Upper lobe of right lung (tissue), 1 donor: ENCODE measurements at regions of chr9 and their contacts with region 1.

Region 1: GRCh38 chr9:69044240-69045219 is 9.0 kb downstream of the FXN start:
- DNase-seq: no peak
- ATAC-seq: no peak
- H3K4me3 ChIP-seq: no peak overlapping the region
- H3K27ac ChIP-seq: no peak overlapping the region
- H3K4me1 ChIP-seq: peaks cover 8% of the 10 kb centered on the region
- H3K27me3 ChIP-seq: no peaks in the 10 kb centered on the region
- CTCF ChIP-seq: no peak

Region 2: DNA sequence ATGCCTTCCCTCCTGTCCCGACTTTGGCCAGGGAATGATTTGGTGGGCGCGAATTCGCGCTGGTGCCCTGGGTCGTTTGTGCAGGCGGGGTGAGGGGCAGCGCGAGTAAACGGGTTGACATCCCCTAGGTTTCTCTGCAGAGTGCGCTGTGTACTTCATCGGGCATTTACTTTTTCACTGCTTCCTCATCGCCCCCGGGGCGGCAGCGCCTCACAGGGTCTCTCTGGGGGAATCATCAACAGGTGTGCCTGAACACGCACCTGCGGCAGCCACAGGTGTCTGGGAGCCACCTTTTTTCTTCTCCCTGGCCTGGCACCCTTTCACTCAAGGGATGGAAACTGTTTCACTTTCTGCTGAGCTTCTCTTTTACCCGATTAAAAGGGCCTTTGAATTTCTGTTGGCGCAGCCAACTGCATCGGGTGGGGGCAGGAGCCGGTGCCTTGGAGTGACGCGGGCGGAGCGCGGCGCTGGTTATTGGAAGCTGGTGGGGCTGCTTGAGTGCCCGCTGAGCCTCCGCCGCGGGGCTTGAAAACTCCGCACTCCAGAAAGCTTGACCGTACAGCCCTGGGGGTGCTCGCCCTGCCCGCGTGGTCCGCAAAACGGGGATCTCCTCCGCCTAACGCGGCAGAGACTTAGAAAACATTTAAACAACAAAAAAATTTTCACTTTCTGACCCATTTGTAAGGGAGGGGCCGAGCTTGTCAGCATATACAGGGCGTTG is 77.5 kb after region 1 on chr9:
- intact Hi-C with region 1: no loop called
- DNase-seq: peak; percentile 89
- ATAC-seq: peak; percentile 71
- H3K4me3 ChIP-seq: peak overlapping the region; percentile 83
- H3K27ac ChIP-seq: peak overlapping the region; percentile 89
- H3K4me1 ChIP-seq: no peaks in the 10 kb centered on the region
- H3K27me3 ChIP-seq: no peaks in the 10 kb centered on the region
- CTCF ChIP-seq: no peak

Region 3: DNA sequence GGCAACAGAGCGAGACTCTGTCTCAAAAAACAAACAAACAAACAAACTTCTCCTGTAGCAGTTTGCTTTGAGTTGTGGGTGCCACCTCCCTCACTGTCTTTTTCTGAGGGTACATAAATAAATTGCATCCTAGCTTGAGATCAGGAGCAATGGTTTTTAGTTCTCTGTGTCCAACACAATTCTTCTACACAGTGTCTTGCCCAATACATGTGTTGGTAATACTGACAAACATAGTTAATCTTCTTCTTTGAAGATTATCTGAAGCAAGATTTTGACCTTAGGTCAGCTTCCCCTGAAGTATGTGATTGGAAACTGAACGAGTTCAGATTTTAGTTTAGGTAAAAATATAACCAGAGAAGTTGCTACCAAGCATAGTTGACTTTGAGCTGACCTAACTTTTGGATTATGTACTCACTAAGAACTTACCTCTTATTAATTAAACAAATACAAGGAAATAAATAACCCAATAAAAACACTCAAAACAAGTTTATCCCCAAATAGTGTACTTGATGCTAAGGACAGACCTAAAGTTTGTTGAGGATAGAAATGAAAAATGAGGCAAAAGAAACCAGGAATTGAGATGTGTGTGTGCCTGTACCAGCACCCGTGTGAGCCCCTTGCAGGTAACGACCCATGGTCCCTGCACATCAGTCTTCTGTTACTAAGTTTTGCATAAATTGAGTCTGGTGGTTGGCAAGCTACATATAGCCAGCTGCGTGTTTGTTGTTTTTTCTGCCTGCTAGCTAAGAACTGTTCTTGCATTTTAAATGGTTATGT is 145.7 kb after region 1 on chr9:
- intact Hi-C with region 1: loop called (anchors 5 kb)
- DNase-seq: no peak
- ATAC-seq: no peak
- H3K4me3 ChIP-seq: no peak overlapping the region
- H3K27ac ChIP-seq: peak overlapping the region; percentile 18
- H3K4me1 ChIP-seq: peaks cover 53% of the 10 kb centered on the region
- H3K27me3 ChIP-seq: no peaks in the 10 kb centered on the region
- CTCF ChIP-seq: no peak